MCF 10A (cell line): ENCODE measurements at regions of chrX and their contacts with region 1.

Region 1: GRCh38 chrX:129925305-129926092 is 19.5 kb downstream of the UTP14A start:
- DNase-seq: peak; percentile 72
- H3K4me3 Mint-ChIP-seq: no peak overlapping the region
- H3K27ac Mint-ChIP-seq: no peak overlapping the region
- H3K4me1 Mint-ChIP-seq: no peaks in the 10 kb centered on the region
- H3K27me3 Mint-ChIP-seq: peaks cover 14% of the 10 kb centered on the region
- CTCF ChIP-seq: peak; percentile 50

Region 2: DNA sequence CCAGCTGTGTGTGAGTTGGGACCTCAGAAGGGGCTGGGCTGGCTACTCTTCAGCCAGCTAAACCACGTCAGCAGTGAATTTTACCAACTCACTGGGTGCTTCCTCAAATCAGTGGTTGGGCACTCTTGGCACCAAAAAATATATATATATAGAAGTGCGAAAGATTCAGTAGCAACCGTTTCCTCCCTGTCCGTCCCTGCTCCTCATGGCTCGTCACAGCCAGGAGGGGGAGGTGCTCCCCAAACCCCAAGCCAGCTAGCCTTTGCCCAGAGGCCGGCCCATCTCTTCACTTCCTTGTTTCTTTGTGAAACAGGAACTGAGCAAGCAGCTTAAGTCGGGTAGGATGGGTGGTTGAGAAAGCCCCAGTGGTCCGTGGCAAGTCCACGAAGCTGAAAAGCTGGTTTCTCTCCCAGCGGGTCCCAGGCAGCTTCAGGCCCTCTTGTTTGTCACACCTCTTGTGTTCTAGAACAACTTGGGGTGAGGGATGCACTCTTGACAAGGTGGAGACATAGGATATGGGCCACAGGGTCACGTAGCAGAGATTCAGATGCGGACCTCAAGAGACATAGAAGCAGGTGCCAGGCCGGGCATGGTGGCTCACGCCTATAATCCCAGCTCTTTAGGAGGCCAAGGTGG is 152.6 kb before region 1 on chrX:
- CTCF ChIA-PET with region 1: no interaction called
- POLR2A ChIA-PET with region 1: no interaction called
- intact Hi-C with region 1: no loop called
- DNase-seq: no peak
- H3K4me3 Mint-ChIP-seq: no peak overlapping the region
- H3K27ac Mint-ChIP-seq: no peak overlapping the region
- H3K4me1 Mint-ChIP-seq: no peaks in the 10 kb centered on the region
- H3K27me3 Mint-ChIP-seq: no peaks in the 10 kb centered on the region
- CTCF ChIP-seq: no peak

Region 3: DNA sequence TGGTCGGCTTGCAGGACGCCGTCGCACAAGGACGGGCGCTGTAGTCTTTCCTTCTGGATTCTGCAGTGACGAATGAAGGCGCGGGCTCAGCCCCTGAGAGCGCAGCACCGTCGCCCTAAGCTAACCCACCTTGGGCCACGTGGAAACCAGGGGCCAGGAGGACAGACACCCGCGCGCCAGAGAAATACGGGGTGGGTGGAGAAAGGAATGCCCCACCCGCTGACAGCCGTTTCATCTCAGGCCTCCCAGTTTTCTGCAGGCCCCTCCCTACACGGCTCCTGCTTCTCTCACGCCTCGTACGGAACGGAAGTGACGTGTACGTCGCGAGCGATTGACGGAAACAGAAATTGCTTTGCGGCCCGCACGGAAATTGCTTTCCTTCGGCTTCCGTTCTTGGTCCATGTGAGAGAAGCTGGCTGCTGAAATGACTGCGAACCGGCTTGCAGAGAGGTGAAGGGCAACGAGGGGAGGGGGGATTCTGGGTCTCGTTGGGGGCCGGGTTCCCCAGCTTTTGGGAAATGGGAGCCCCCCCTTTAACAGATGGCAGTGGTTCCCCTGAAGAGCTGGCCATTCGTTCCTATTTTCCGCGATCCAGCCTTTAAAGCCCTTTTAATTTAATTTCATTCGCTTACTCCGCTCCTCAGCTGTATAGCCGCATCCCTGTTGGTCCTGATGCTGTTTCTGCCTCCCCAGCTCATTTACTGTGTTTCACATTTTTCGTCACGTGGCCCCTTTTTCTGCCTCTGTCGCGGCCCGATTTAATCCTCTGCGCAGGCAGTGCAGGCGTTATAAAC is 19.5 kb before region 1 on chrX and contains the start of gene UTP14A:
- CTCF ChIA-PET with region 1: interaction called, 14 read pairs
- POLR2A ChIA-PET with region 1: interaction called, 6 read pairs
- intact Hi-C with region 1: no loop called
- DNase-seq: peak; percentile 88
- H3K4me3 Mint-ChIP-seq: peak within 1 kb of the TSS; percentile 78
- H3K27ac Mint-ChIP-seq: peak within 1 kb of the TSS; percentile 83
- H3K4me1 Mint-ChIP-seq: peaks cover 3% of the 10 kb centered on the region
- H3K27me3 Mint-ChIP-seq: peaks cover 18% of the 10 kb centered on the region
- CTCF ChIP-seq: no peak
- total RNA-seq, gene UTP14A: 30.3 and 48.3 TPM in 2 replicates

Region 4: GRCh38 chrX:130028196-130028595 is 102.7 kb after region 1 on chrX:
- CTCF ChIA-PET with region 1: interaction called, 52 read pairs
- POLR2A ChIA-PET with region 1: no interaction called
- intact Hi-C with region 1: loop called (anchors 1 kb)
- DNase-seq: peak; percentile 45
- H3K4me3 Mint-ChIP-seq: no peak overlapping the region
- H3K27ac Mint-ChIP-seq: no peak overlapping the region
- H3K4me1 Mint-ChIP-seq: no peaks in the 10 kb centered on the region
- H3K27me3 Mint-ChIP-seq: peaks cover 36% of the 10 kb centered on the region
- CTCF ChIP-seq: peak; percentile 40

Region 5: DNA sequence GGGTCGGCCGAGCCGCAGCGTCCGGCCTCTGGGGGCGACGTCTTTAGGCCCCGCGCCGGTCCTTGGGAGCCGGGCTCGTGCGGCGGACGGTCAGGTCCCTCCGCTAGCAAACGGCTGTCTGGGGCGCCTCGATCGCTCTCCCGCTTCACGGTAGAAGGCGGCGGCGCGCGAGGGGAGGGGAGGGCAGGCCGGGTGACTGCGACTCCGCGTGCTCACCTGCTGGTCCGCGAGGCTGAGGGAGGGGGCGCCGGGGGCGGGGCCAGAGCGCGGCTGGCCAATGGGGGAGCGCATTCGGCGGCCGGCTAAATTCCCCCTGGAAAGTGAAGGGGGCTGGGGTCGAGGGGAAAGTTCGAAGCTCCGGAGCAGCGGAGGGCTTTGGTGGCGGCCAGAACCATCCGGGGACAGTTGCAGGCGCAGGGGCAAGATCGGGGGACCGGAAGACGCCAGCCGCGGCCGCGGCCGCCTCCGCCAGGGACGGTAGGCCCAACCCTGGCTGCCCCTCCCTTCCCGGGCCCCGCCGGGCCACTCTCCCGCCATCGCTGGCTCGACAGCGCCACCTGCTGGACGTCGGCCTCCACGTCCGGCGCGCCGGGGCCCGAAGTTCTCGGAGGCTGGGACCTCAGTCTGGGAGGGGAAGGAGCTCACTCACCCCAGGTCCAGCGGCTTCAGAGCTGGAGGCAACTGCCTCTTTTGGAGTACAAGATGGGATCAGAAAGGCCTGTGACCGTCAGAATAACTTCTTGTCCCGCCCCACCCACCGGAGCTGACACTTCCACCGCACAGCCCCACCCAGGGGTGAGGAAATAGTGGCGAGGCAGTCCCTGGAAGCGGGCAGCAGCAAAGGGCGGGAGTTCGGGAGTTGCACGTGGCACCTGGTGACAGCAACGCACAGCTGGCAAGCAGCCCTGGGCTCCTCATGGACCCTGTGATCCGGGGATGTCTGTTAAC is 134.9 kb after region 1 on chrX:
- CTCF ChIA-PET with region 1: interaction called, 22 read pairs
- POLR2A ChIA-PET with region 1: no interaction called
- intact Hi-C with region 1: loop called (anchors 1 kb)
- DNase-seq: peak; percentile 67
- H3K4me3 Mint-ChIP-seq: peak overlapping the region; percentile 65
- H3K27ac Mint-ChIP-seq: peak overlapping the region; percentile 85
- H3K4me1 Mint-ChIP-seq: no peaks in the 10 kb centered on the region
- H3K27me3 Mint-ChIP-seq: peaks cover 26% of the 10 kb centered on the region
- CTCF ChIP-seq: peak; percentile 78

Region 6: DNA sequence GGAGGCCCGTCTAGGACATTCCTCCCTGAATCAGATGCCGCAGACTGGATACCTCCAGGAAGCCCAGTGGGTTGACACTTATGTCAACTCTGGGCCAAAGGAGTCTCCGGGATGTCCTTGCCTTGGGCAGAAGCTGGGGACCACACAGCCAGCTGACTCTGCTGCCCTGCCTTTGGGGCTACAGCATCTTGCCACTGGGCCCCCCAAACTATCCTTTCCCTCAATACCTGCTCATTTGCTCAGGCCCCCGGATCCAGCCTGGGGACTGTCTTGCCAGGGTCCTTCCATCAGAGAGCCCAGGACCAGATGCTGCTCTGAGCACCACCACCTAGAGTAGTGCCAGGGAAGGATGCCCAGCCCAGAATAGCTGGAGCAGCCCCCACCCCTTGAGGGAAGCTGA is 265.3 kb after region 1 on chrX:
- CTCF ChIA-PET with region 1: interaction called, 4 read pairs
- POLR2A ChIA-PET with region 1: no interaction called
- intact Hi-C with region 1: loop called (anchors 5 kb)
- DNase-seq: no peak
- H3K4me3 Mint-ChIP-seq: no peak overlapping the region
- H3K27ac Mint-ChIP-seq: no peak overlapping the region
- H3K4me1 Mint-ChIP-seq: no peaks in the 10 kb centered on the region
- H3K27me3 Mint-ChIP-seq: peaks cover 37% of the 10 kb centered on the region
- CTCF ChIP-seq: no peak